CD4-positive, alpha-beta memory T cell (primary cell): ENCODE measurements at regions of chr12 and their contacts with region 1.

Region 1: DNA sequence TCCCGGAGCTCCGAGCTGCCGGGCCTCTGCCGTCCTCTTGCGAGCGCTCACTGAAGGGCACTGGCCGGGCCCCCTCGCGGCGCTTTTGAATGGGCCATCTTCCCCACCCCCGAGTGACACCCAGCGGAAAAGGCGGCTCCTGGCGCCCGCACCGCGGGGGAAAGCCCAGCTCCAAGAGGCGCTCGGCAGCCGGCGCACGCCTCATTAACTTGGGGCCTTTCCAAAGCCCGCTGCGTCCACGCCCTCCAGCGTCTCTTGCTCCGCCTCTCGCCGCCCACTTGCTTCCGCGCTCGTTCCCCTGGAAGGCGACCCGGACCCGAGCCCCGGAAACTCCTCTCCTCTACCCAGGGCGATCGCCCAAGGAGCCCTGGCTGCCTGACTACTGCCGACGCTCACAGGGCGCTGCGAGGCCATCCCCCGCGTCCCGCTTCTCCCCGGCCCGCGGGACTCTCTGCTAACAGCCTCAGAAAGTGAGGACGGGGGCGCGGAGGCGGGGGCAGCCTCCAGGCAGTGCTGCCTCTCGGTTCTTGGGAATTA is at the start of gene PHLDA1:
- DNase-seq: peak; percentile 88 to 95 (median 91)
- H3K4me3 ChIP-seq: peak within 1 kb of the TSS; percentile 69 to 84
- H3K4me3 Mint-ChIP-seq: peak within 1 kb of the TSS; percentile 90 to 98 (median 94)
- H3K27ac ChIP-seq: peak within 1 kb of the TSS; percentile 89
- H3K27ac Mint-ChIP-seq: peak within 1 kb of the TSS; percentile 94 to 98 (median 98)
- H3K4me1 ChIP-seq: peaks cover 24% of the 10 kb centered on the region
- H3K4me1 Mint-ChIP-seq: peaks cover 18 to 45% (median 31%) of the 10 kb centered on the region in 4 donors
- H3K27me3 ChIP-seq: no peaks in the 10 kb centered on the region
- H3K27me3 Mint-ChIP-seq: no peaks in the 10 kb centered on the region
- total RNA-seq, gene PHLDA1: 8.2 to 8.5 TPM

Region 2: DNA sequence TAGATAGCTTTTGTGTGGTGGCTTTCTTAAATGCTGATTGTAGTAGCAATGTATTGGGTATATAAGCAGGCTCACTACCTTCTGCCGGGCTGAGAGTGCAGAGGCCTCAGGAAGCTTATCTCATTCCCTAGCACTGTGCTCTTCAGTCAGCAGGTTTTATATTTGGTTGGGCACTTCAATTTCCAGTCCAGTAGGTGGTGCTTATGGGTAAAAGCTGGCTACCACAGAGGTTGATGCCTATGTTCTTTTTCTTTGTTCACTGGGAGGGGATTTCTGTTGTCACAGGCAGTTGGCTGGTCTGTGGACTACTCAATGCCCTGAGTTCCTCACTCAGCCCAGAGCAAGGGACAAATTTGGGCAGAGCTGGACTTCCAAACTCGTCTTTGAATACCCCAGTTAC is 594.0 kb before region 1 on chr12:
- CTCF ChIA-PET with region 1: no interaction called
- POLR2A ChIA-PET with region 1: no interaction called
- intact Hi-C with region 1: loop called (anchors 5 kb)
- DNase-seq: peak; percentile 43 to 61 (median 51)
- H3K4me3 ChIP-seq: no peak overlapping the region
- H3K4me3 Mint-ChIP-seq: peak overlapping the region in 2 of 8 donors; percentile 17 to 43
- H3K27ac ChIP-seq: no peak overlapping the region
- H3K27ac Mint-ChIP-seq: peak overlapping the region in 5 of 7 donors; percentile 52 to 91 (median 57)
- H3K4me1 ChIP-seq: peaks cover 13% of the 10 kb centered on the region
- H3K4me1 Mint-ChIP-seq: peaks cover 11 to 17% (median 15%) of the 10 kb centered on the region in 4 donors
- H3K27me3 ChIP-seq: no peaks in the 10 kb centered on the region
- H3K27me3 Mint-ChIP-seq: no peaks in the 10 kb centered on the region

Region 3: GRCh38 chr12:75526655-75527511 is 504.7 kb before region 1 on chr12:
- CTCF ChIA-PET with region 1: interaction called, 173 read pairs
- POLR2A ChIA-PET with region 1: no interaction called
- intact Hi-C with region 1: no loop called
- DNase-seq: peak in 4 of 5 donors; percentile 32 to 42 (median 40)
- H3K4me3 ChIP-seq: no peak overlapping the region
- H3K4me3 Mint-ChIP-seq: no peak overlapping the region
- H3K27ac ChIP-seq: no peak overlapping the region
- H3K27ac Mint-ChIP-seq: no peak overlapping the region
- H3K4me1 ChIP-seq: no peaks in the 10 kb centered on the region
- H3K4me1 Mint-ChIP-seq: peaks cover 0 to 2% (median 0%) of the 10 kb centered on the region in 4 donors
- H3K27me3 ChIP-seq: no peaks in the 10 kb centered on the region
- H3K27me3 Mint-ChIP-seq: peaks cover 5 to 22% of the 10 kb centered on the region in 2 donors

Region 4: DNA sequence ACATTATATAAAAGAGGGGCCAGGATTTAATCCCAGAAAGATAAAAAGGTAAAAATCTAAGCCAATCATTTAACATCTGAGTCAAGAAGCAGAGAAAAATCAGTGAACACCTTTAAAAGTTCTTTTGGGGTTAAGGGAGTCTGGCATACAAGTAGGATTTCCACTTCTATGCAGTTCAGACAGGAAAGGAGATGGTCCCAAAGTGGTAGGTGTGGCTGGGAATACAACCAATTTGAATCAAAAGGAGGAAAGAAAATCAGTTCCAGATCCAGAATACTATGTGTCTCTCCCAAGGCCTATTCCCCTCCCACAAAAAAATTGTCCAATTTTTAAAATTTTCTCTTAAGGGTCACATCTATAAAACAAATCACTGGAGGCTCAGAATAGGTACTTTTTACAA is 167.4 kb before region 1 on chr12:
- CTCF ChIA-PET with region 1: no interaction called
- POLR2A ChIA-PET with region 1: no interaction called
- intact Hi-C with region 1: no loop called
- DNase-seq: no peak
- H3K4me3 ChIP-seq: no peak overlapping the region
- H3K4me3 Mint-ChIP-seq: no peak overlapping the region
- H3K27ac ChIP-seq: no peak overlapping the region
- H3K27ac Mint-ChIP-seq: no peak overlapping the region
- H3K4me1 ChIP-seq: no peaks in the 10 kb centered on the region
- H3K4me1 Mint-ChIP-seq: peaks cover 0 to 1% (median 0%) of the 10 kb centered on the region in 4 donors
- H3K27me3 ChIP-seq: no peaks in the 10 kb centered on the region
- H3K27me3 Mint-ChIP-seq: no peaks in the 10 kb centered on the region

Region 5: DNA sequence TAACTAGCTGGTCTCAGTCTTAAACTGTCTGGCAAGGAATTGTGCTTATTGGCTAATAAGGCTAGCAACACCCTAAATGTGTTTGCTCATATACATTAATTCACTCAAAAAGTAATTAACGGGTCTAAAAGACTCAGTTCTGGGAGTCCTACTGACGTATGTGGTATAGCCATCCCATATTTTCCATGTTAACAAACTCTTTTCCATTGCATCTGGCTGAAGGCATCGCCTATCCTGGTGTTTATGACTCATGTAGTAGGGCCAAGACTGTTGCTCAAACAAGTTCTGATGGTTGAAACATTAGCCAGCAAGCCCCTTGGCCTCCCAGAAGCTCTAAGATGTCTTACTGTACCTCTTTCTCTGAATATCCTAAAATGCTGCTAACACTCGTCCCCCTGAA is 98.5 kb before region 1 on chr12:
- CTCF ChIA-PET with region 1: interaction called, 4 read pairs
- POLR2A ChIA-PET with region 1: interaction called, 29 read pairs
- intact Hi-C with region 1: no loop called
- DNase-seq: no peak
- H3K4me3 ChIP-seq: no peak overlapping the region
- H3K4me3 Mint-ChIP-seq: no peak overlapping the region
- H3K27ac ChIP-seq: no peak overlapping the region
- H3K27ac Mint-ChIP-seq: no peak overlapping the region
- H3K4me1 ChIP-seq: peaks cover 23% of the 10 kb centered on the region
- H3K4me1 Mint-ChIP-seq: peaks cover 8 to 18% (median 9%) of the 10 kb centered on the region in 4 donors
- H3K27me3 ChIP-seq: no peaks in the 10 kb centered on the region
- H3K27me3 Mint-ChIP-seq: no peaks in the 10 kb centered on the region

Region 6: GRCh38 chr12:75977952-75978671 is 53.5 kb before region 1 on chr12:
- CTCF ChIA-PET with region 1: interaction called, 10 read pairs
- POLR2A ChIA-PET with region 1: interaction called, 80 read pairs
- intact Hi-C with region 1: loop called (anchors 1 kb)
- DNase-seq: peak; percentile 69 to 95 (median 79)
- H3K4me3 ChIP-seq: no peak overlapping the region
- H3K4me3 Mint-ChIP-seq: peak overlapping the region; percentile 4 to 75 (median 48)
- H3K27ac ChIP-seq: peak overlapping the region; percentile 79
- H3K27ac Mint-ChIP-seq: peak overlapping the region; percentile 90 to 98 (median 92)
- H3K4me1 ChIP-seq: peaks cover 32% of the 10 kb centered on the region
- H3K4me1 Mint-ChIP-seq: peaks cover 25 to 55% (median 36%) of the 10 kb centered on the region in 4 donors
- H3K27me3 ChIP-seq: no peaks in the 10 kb centered on the region
- H3K27me3 Mint-ChIP-seq: no peaks in the 10 kb centered on the region

Region 7: GRCh38 chr12:76106631-76107030 is 75.0 kb after region 1 on chr12:
- CTCF ChIA-PET with region 1: no interaction called
- POLR2A ChIA-PET with region 1: no interaction called
- intact Hi-C with region 1: no loop called
- DNase-seq: no peak
- H3K4me3 ChIP-seq: no peak overlapping the region
- H3K4me3 Mint-ChIP-seq: no peak overlapping the region
- H3K27ac ChIP-seq: no peak overlapping the region
- H3K27ac Mint-ChIP-seq: no peak overlapping the region
- H3K4me1 ChIP-seq: no peaks in the 10 kb centered on the region
- H3K4me1 Mint-ChIP-seq: no peaks in the 10 kb centered on the region
- H3K27me3 ChIP-seq: no peaks in the 10 kb centered on the region
- H3K27me3 Mint-ChIP-seq: peaks cover 1 to 3% of the 10 kb centered on the region in 2 donors